MCF 10A (cell line): ENCODE measurements at regions of chr4 and their contacts with region 1.

Region 1: GRCh38 chr4:3388471-3389232 is 53.1 kb upstream of the HGFAC start:
- DNase-seq: peak; percentile 49
- H3K4me3 Mint-ChIP-seq: peak overlapping the region; percentile 81
- H3K27ac Mint-ChIP-seq: peak overlapping the region; percentile 81
- H3K4me1 Mint-ChIP-seq: peaks cover 52% of the 10 kb centered on the region
- H3K27me3 Mint-ChIP-seq: no peaks in the 10 kb centered on the region
- CTCF ChIP-seq: no peak

Region 2: DNA sequence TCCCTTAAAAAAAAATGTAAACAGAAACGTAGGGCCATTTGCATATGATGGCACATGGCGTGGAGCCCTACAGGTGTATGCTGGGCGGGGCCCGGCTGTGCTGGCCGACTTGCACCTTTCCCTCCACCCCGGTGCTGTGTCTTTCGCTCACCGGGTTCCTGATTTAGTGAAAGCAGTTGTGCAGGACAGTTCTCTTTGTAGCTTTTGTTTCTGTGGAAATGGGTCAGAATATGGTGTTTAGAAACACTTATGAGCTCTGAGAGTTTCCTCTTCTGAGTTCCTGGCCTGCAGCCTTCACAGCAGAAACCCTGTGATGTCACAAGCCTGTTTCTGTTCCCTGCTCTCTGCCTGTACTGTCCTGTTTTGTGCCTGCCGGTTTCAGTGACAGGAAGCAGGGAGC is 162.2 kb before region 1 on chr4:
- CTCF ChIA-PET with region 1: no interaction called
- POLR2A ChIA-PET with region 1: no interaction called
- intact Hi-C with region 1: no loop called
- DNase-seq: no peak
- H3K4me3 Mint-ChIP-seq: no peak overlapping the region
- H3K27ac Mint-ChIP-seq: no peak overlapping the region
- H3K4me1 Mint-ChIP-seq: no peaks in the 10 kb centered on the region
- H3K27me3 Mint-ChIP-seq: no peaks in the 10 kb centered on the region
- CTCF ChIP-seq: no peak

Region 3: GRCh38 chr4:3292571-3293400 is 95.9 kb before region 1 on chr4 and contains the start of gene RGS12:
- CTCF ChIA-PET with region 1: interaction called, 4 read pairs
- POLR2A ChIA-PET with region 1: interaction called, 11 read pairs
- intact Hi-C with region 1: no loop called
- DNase-seq: peak; percentile 93
- H3K4me3 Mint-ChIP-seq: peak within 1 kb of the TSS; percentile 84
- H3K27ac Mint-ChIP-seq: peak within 1 kb of the TSS; percentile 76
- H3K4me1 Mint-ChIP-seq: peaks cover 16% of the 10 kb centered on the region
- H3K27me3 Mint-ChIP-seq: no peaks in the 10 kb centered on the region
- CTCF ChIP-seq: no peak
- total RNA-seq, gene RGS12: 28.3 and 36.0 TPM in 2 replicates

Region 4: GRCh38 chr4:3436798-3437581 is 48.3 kb after region 1 on chr4:
- CTCF ChIA-PET with region 1: no interaction called
- POLR2A ChIA-PET with region 1: interaction called, 24 read pairs
- intact Hi-C with region 1: no loop called
- DNase-seq: peak; percentile 94
- H3K4me3 Mint-ChIP-seq: peak overlapping the region; percentile 40
- H3K27ac Mint-ChIP-seq: peak overlapping the region; percentile 91
- H3K4me1 Mint-ChIP-seq: peaks cover 20% of the 10 kb centered on the region
- H3K27me3 Mint-ChIP-seq: no peaks in the 10 kb centered on the region
- CTCF ChIP-seq: no peak